CD4-positive, alpha-beta memory T cell (primary cell): ENCODE measurements at regions of chr17 and their contacts with region 1.

Region 1: GRCh38 chr17:19744922-19745757 is 3.0 kb downstream of the ALDH3A1 start:
- DNase-seq: peak; percentile 78 to 82 (median 79)
- H3K4me3 ChIP-seq: no peak overlapping the region
- H3K4me3 Mint-ChIP-seq: peak overlapping the region in 7 of 8 donors; percentile 40 to 71 (median 54)
- H3K27ac ChIP-seq: no peak overlapping the region
- H3K27ac Mint-ChIP-seq: no peak overlapping the region
- H3K4me1 ChIP-seq: peaks cover 8% of the 10 kb centered on the region
- H3K4me1 Mint-ChIP-seq: peaks cover 3 to 9% (median 4%) of the 10 kb centered on the region in 4 donors
- H3K27me3 ChIP-seq: no peaks in the 10 kb centered on the region
- H3K27me3 Mint-ChIP-seq: peaks cover 3 to 7% of the 10 kb centered on the region in 2 donors

Region 2: GRCh38 chr17:19513897-19514488 is 231.1 kb before region 1 on chr17:
- CTCF ChIA-PET with region 1: interaction called, 10 read pairs
- POLR2A ChIA-PET with region 1: no interaction called
- intact Hi-C with region 1: loop called (anchors 1 kb)
- DNase-seq: peak; percentile 59 to 68 (median 64)
- H3K4me3 ChIP-seq: no peak overlapping the region
- H3K4me3 Mint-ChIP-seq: no peak overlapping the region
- H3K27ac ChIP-seq: no peak overlapping the region
- H3K27ac Mint-ChIP-seq: peak overlapping the region in 4 of 7 donors; percentile 7 to 68 (median 31)
- H3K4me1 ChIP-seq: no peaks in the 10 kb centered on the region
- H3K4me1 Mint-ChIP-seq: peaks cover 1 to 8% (median 3%) of the 10 kb centered on the region in 4 donors
- H3K27me3 ChIP-seq: no peaks in the 10 kb centered on the region
- H3K27me3 Mint-ChIP-seq: no peaks in the 10 kb centered on the region

Region 3: DNA sequence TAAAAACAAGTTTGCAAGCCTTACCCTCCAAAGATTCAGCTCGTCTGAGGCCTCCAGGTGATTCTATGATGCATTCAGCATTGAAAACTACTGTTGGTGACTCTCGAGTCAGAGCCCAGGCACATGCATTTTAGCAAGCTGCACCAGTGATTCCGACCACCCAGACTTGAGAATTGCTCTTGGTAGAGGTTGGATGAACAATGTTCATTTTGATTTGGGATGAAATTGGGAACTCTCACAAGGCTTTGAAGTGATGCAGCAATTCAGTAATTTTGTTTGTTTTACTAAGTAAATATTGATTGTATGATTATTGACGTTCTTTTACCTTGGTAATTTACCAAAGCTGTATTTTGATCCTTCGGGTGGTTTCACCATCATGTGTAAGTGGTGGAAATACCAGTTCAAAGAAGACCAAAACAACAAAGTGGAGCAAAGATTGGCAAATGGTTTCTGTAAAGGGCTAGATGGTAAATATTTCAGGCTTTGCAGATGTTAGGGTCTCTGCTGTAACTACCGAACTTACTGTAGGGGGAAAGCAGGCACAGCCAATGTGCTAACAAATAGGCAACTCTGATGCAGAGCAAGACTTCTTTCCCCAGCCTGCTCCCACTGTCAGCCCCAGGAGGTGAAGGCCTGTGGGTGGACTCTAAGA is 84.8 kb before region 1 on chr17:
- CTCF ChIA-PET with region 1: interaction called, 11 read pairs
- POLR2A ChIA-PET with region 1: no interaction called
- intact Hi-C with region 1: no loop called
- DNase-seq: no peak
- H3K4me3 ChIP-seq: no peak overlapping the region
- H3K4me3 Mint-ChIP-seq: no peak overlapping the region
- H3K27ac ChIP-seq: no peak overlapping the region
- H3K27ac Mint-ChIP-seq: no peak overlapping the region
- H3K4me1 ChIP-seq: no peaks in the 10 kb centered on the region
- H3K4me1 Mint-ChIP-seq: peaks cover 0 to 6% (median 0%) of the 10 kb centered on the region in 4 donors
- H3K27me3 ChIP-seq: no peaks in the 10 kb centered on the region
- H3K27me3 Mint-ChIP-seq: no peaks in the 10 kb centered on the region

Region 4: GRCh38 chr17:19733953-19734526 is 11.1 kb before region 1 on chr17:
- CTCF ChIA-PET with region 1: interaction called, 15 read pairs
- POLR2A ChIA-PET with region 1: no interaction called
- intact Hi-C with region 1: no loop called
- DNase-seq: no peak
- H3K4me3 ChIP-seq: no peak overlapping the region
- H3K4me3 Mint-ChIP-seq: no peak overlapping the region
- H3K27ac ChIP-seq: no peak overlapping the region
- H3K27ac Mint-ChIP-seq: no peak overlapping the region
- H3K4me1 ChIP-seq: no peaks in the 10 kb centered on the region
- H3K4me1 Mint-ChIP-seq: peaks cover 0 to 2% (median 0%) of the 10 kb centered on the region in 4 donors
- H3K27me3 ChIP-seq: no peaks in the 10 kb centered on the region
- H3K27me3 Mint-ChIP-seq: no peaks in the 10 kb centered on the region